ENCODE measurements at regions of chr7 and their contacts with region 1.

Region 1: GRCh38 chr7:40057292-40057691 is 77.1 kb downstream of the MPLKIP start:
- DNase-seq: no peak
- H3K4me3 ChIP-seq: no peak overlapping the region
- H3K4me1 ChIP-seq: no peaks in the 10 kb centered on the region
- H3K27me3 ChIP-seq: no peaks in the 10 kb centered on the region

Region 2: GRCh38 chr7:39894904-39895303 is 162.4 kb before region 1 on chr7:
- in situ Hi-C with region 1: loop called (anchors 10 kb)
- DNase-seq: no peak
- H3K4me3 ChIP-seq: no peak overlapping the region
- H3K4me1 ChIP-seq: no peaks in the 10 kb centered on the region
- H3K27me3 ChIP-seq: 0 out of 2 replicates have a peak, but pooled peaks cover 2% of the 10 kb centered on the region

Measured in HAP-1 (cell line).